ENCODE measurements at regions of chr9 and their contacts with region 1.

Region 1: DNA sequence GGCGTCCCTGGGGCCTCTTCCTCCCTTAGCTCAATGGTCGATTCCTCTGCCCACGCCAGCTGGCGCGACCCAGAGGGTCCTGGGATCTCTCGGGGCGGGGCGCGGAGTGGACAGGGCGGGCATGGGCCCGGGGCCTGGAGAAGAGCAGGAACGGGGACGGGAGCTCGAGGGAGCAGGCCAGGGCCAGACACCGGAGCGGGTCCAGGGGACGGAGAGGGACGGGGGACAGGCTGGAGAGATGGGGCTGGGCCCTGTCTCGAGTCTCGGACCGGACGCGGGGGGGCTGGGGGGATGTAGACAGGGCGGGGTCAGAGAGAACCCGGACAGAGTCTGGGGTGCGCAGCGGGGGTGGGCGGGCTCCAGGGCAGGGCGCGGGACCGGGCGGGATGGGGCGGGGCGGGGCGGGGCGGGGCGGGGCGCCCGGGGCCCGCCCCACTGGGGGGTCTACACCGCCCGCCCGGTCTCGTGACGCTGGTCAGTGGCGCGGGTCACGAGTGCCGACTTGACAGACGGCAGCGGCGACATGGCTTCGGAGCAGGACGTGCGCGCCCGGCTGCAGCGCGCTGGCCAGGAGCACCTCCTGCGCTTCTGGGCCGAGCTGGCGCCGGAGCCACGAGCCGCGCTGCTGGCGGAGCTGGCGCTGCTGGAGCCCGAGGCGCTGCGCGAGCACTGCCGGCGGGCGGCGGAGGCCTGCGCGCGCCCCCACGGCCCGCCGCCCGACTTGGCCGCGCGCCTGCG is at the start of gene UAP1L1:
- DNase-seq: peak; percentile 68
- H3K4me3 Mint-ChIP-seq: peak within 1 kb of the TSS; percentile 65
- H3K27ac Mint-ChIP-seq: no peak within 1 kb of the TSS
- H3K4me1 Mint-ChIP-seq: no peaks in the 10 kb centered on the region
- H3K27me3 Mint-ChIP-seq: no peaks in the 10 kb centered on the region
- total RNA-seq, gene UAP1L1: 6.7 to 7.7 TPM

Region 2: DNA sequence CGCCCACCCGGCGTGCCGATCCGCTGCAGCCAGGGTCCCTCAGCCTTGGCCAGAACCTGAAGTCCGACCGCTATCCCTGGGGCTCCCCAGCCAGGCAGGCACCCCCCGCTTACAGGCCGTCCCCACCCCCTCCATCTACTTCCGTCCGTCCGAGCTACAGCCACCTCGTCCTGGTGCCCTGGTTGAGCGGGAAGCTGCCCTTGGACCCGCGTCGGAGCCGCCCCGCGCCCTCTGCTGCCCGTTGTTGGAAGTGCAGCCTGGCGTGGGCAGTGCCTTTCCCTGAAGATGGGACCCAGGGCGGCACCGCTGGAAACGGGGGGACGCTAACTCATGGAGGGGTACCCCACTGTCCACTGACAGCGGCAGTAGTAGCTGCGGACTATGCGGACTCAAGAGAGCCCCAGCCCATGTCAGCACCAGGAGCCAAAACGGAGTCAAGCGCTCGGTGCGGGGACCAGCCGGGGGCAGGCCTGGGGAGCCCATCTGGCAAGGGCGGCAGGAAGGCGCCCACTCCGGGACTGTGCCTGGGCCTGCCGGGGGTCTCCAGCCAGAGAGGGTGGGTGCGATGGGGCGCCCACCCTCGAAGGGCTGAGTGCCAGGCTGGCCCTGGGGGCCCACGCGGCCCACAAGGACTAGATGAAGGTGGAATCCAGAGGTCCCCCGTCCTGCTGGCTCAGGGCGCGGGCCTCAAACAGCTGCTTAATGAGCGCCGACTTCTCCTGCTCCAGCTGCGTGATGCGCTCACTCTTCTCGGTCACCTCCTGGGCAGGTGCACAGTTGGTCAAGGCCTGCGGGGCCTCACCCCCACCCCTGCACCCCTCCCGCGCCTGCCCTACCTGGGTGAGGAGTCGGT is 12.9 kb before region 1 on chr9:
- CTCF ChIA-PET with region 1: interaction called, 25 read pairs
- POLR2A ChIA-PET with region 1: interaction called, 3 read pairs
- intact Hi-C with region 1: no loop called
- DNase-seq: peak; percentile 68
- H3K4me3 Mint-ChIP-seq: no peak overlapping the region
- H3K27ac Mint-ChIP-seq: peak overlapping the region; percentile 44
- H3K4me1 Mint-ChIP-seq: peaks cover 4% of the 10 kb centered on the region
- H3K27me3 Mint-ChIP-seq: no peaks in the 10 kb centered on the region

Region 3: GRCh38 chr9:137200311-137201204 is 123.4 kb after region 1 on chr9 and contains the start of gene TPRN:
- CTCF ChIA-PET with region 1: no interaction called
- POLR2A ChIA-PET with region 1: no interaction called
- intact Hi-C with region 1: no loop called
- DNase-seq: peak; percentile 99
- H3K4me3 Mint-ChIP-seq: peak within 1 kb of the TSS; percentile 82
- H3K27ac Mint-ChIP-seq: peak within 1 kb of the TSS; percentile 67
- H3K4me1 Mint-ChIP-seq: peaks cover 26% of the 10 kb centered on the region
- H3K27me3 Mint-ChIP-seq: no peaks in the 10 kb centered on the region
- total RNA-seq, gene TPRN: 6.1 to 6.7 TPM

Measured in activated CD4-positive, alpha-beta memory T cell treated with anti-CD3 and anti-CD28 coated beads for 36 hours (primary cell).